MCF 10A (cell line): ENCODE measurements at regions of chr22 and their contacts with region 1.

Region 1: GRCh38 chr22:28009272-28009827 is 90.3 kb upstream of the PITPNB start:
- DNase-seq: peak; percentile 73
- H3K4me3 Mint-ChIP-seq: no peak overlapping the region
- H3K27ac Mint-ChIP-seq: no peak overlapping the region
- H3K4me1 Mint-ChIP-seq: no peaks in the 10 kb centered on the region
- H3K27me3 Mint-ChIP-seq: no peaks in the 10 kb centered on the region
- CTCF ChIP-seq: peak; percentile 97

Region 2: GRCh38 chr22:26679003-26679629 is 1330.2 kb before region 1 on chr22:
- CTCF ChIA-PET with region 1: interaction called, 3 read pairs
- POLR2A ChIA-PET with region 1: no interaction called
- intact Hi-C with region 1: loop called (anchors 2 kb)
- DNase-seq: peak; percentile 68
- H3K4me3 Mint-ChIP-seq: no peak overlapping the region
- H3K27ac Mint-ChIP-seq: no peak overlapping the region
- H3K4me1 Mint-ChIP-seq: peaks cover 13% of the 10 kb centered on the region
- H3K27me3 Mint-ChIP-seq: no peaks in the 10 kb centered on the region
- CTCF ChIP-seq: peak; percentile 89

Region 3: DNA sequence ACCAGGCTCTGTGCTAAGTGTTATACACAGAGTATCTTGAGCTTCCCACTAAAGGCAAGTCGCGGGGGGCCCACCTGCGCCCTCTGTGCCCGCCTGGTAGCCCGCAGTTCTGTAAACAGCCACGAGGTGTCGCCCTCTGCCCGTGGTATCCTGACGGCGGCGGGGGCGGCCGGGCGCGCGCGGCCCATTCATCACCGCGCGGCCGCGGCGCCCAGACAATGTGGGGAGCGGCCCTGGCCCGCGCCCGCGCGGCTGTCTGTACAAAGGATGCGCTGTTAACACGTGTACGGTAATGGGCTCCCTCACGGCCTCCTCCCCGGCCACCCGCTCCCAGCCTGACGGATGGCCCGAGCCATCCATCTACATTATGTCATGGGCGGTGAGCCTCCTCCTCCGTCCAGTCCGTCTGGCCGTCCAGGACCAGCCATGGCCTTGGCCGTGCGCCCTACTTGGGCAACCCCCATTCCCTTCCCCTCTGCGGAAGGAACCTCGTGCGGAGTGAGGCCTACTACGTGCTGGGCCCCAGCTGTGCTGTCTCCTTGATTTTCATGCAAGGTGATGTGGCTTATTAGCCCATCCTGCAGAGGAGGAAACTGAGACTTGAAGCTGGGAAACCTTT is 1252.6 kb before region 1 on chr22:
- CTCF ChIA-PET with region 1: interaction called, 3 read pairs
- POLR2A ChIA-PET with region 1: no interaction called
- intact Hi-C with region 1: loop called (anchors 5 kb)
- DNase-seq: peak; percentile 11
- H3K4me3 Mint-ChIP-seq: no peak overlapping the region
- H3K27ac Mint-ChIP-seq: no peak overlapping the region
- H3K4me1 Mint-ChIP-seq: no peaks in the 10 kb centered on the region
- H3K27me3 Mint-ChIP-seq: no peaks in the 10 kb centered on the region
- CTCF ChIP-seq: peak; percentile 93

Region 4: GRCh38 chr22:27880778-27881394 is 128.5 kb before region 1 on chr22:
- CTCF ChIA-PET with region 1: interaction called, 64 read pairs
- POLR2A ChIA-PET with region 1: interaction called, 3 read pairs
- intact Hi-C with region 1: loop called (anchors 1 kb)
- DNase-seq: peak; percentile 64
- H3K4me3 Mint-ChIP-seq: no peak overlapping the region
- H3K27ac Mint-ChIP-seq: peak overlapping the region; percentile 39
- H3K4me1 Mint-ChIP-seq: peaks cover 17% of the 10 kb centered on the region
- H3K27me3 Mint-ChIP-seq: no peaks in the 10 kb centered on the region
- CTCF ChIP-seq: peak; percentile 46

Region 5: GRCh38 chr22:27919222-27919941 is 90.0 kb before region 1 on chr22 and contains the start of gene PITPNB:
- CTCF ChIA-PET with region 1: interaction called, 4 read pairs
- POLR2A ChIA-PET with region 1: interaction called, 5 read pairs
- intact Hi-C with region 1: loop called (anchors 1 kb)
- DNase-seq: peak; percentile 98
- H3K4me3 Mint-ChIP-seq: peak within 1 kb of the TSS; percentile 91
- H3K27ac Mint-ChIP-seq: peak within 1 kb of the TSS; percentile 97
- H3K4me1 Mint-ChIP-seq: peaks cover 39% of the 10 kb centered on the region
- H3K27me3 Mint-ChIP-seq: no peaks in the 10 kb centered on the region
- CTCF ChIP-seq: no peak
- total RNA-seq, gene PITPNB: 93.1 and 124 TPM in 2 replicates

Region 6: DNA sequence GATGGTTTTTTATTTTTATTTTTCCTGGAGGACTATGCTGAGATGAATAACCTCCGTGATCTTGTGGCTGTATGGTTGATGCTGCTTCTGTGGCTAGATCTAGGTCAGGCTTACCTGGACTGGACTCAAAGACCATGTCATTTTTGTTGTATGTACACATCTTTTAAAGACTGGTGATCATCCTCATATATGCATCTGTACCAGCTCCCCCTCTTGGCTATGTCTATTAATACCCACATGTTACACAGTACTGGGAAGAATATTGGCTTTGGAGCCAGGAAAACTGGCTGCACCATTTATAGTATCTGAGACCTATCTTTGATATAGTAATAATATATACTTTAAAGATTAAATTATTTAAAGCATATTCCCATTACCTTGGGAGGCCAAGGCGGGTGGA is 71.9 kb before region 1 on chr22:
- CTCF ChIA-PET with region 1: no interaction called
- POLR2A ChIA-PET with region 1: no interaction called
- intact Hi-C with region 1: no loop called
- DNase-seq: no peak
- H3K4me3 Mint-ChIP-seq: no peak overlapping the region
- H3K27ac Mint-ChIP-seq: no peak overlapping the region
- H3K4me1 Mint-ChIP-seq: no peaks in the 10 kb centered on the region
- H3K27me3 Mint-ChIP-seq: no peaks in the 10 kb centered on the region
- CTCF ChIP-seq: no peak

Region 7: DNA sequence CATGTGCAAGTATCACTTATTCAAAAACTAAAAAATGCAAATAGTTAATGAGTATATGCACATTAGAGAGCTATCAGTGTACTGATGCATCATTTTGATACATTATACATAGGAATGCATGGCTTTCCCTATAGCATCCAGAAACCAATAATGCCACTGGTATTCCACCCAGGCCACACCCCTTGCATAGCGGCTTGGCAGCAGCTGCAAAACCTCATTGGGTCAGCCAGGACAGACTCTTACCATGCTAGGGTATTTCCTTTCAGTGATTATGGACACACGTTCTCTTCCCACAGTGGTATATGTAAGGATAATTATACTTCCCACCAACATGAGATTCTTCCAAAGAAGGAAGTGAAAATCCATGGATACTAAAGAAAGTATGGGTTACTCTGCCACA is 55.6 kb after region 1 on chr22:
- CTCF ChIA-PET with region 1: no interaction called
- POLR2A ChIA-PET with region 1: no interaction called
- intact Hi-C with region 1: no loop called
- DNase-seq: no peak
- H3K4me3 Mint-ChIP-seq: no peak overlapping the region
- H3K27ac Mint-ChIP-seq: no peak overlapping the region
- H3K4me1 Mint-ChIP-seq: no peaks in the 10 kb centered on the region
- H3K27me3 Mint-ChIP-seq: peaks cover 69% of the 10 kb centered on the region
- CTCF ChIP-seq: no peak

Region 8: DNA sequence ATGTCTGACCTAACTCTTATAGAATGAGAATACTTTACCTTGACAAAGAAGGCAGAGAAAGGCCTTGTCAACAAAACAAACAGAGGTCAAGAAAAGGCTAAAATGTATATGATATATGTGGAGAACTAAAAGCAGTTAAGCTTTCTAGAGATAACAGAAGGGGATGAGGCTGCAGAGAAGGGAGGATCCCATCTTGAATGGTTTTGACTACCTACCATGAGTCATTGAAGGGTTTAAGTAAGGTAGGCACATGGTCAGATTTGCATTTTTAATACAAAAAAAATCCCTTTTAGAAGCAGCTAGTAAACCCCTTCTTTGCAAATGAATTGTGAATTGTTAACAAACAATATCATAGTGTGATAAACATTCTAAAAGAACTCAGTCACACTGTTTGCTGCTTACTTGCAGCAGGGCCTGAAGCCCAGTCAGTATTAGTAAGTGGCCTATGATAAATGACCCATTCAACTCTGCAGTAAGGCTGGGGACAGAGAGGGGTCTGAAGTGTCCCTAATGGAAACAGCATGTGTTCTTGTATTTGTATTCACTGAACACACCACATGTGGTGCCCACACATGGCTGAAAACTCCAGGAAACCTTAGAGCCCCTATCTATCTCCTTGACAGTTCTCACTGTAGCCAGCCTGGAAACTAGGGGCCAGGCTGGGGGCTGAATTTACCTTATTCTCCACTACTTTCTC is 238.5 kb after region 1 on chr22:
- CTCF ChIA-PET with region 1: no interaction called
- POLR2A ChIA-PET with region 1: no interaction called
- intact Hi-C with region 1: no loop called
- DNase-seq: no peak
- H3K4me3 Mint-ChIP-seq: no peak overlapping the region
- H3K27ac Mint-ChIP-seq: no peak overlapping the region
- H3K4me1 Mint-ChIP-seq: peaks cover 6% of the 10 kb centered on the region
- H3K27me3 Mint-ChIP-seq: peaks cover 73% of the 10 kb centered on the region
- CTCF ChIP-seq: no peak